HepG2 (cell line): ENCODE measurements at regions of chr5 and their contacts with region 1.

Region 1: DNA sequence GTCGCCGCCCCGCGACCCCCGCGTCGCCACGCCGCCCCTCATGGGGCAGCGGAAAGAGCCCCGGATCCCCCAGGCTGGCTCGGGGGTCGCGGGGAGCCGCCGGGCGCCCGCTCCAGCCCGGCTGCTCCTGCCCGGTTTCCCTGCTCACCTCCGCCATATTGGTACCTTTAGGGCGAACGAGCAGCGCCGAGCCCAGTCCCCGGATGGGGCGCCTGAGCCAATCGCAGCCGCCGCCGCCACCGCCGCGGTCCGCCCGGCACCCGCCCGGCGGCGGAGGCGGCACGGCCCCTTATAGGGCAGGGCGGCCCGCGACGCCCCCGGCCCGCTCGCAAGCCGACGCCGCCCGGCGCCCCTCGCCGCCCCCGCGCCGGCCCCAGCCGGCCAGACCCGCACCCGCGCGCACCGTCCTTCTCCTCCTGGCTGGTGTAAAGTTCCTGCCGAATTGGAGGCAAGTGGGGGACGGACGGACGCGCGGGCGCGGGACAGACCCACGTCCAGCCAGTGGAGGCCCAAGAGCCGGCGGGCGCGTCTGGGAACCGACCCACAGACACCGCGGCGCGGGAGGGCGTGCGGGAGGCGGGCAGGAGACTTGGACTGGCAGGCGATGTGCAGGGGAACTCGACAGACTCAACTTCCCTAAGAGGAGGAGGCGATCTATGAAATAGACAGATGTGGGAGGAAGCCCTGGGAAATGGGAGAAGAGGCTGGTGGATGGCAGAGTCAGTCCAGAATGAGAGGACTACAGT is at the start of gene MIER3:
- DNase-seq: peak; percentile 43
- ATAC-seq: peak; percentile 95
- H3K4me3 ChIP-seq: peak within 1 kb of the TSS; percentile 90 to 95 (median 91)
- H3K27ac ChIP-seq: peak within 1 kb of the TSS; percentile 72
- H3K4me1 ChIP-seq: peaks cover 31% of the 10 kb centered on the region
- H3K27me3 ChIP-seq: no peaks in the 10 kb centered on the region; a peak in 1 of 5 replicates
- CTCF ChIP-seq: no peak
- EP300 ChIP-seq: no peak
- POLR2A ChIP-seq: peak; percentile 55 to 56
- RAD21 ChIP-seq: no peak
- total RNA-seq, gene MIER3: 38.8 and 63.5 TPM in 2 replicates

Region 2: DNA sequence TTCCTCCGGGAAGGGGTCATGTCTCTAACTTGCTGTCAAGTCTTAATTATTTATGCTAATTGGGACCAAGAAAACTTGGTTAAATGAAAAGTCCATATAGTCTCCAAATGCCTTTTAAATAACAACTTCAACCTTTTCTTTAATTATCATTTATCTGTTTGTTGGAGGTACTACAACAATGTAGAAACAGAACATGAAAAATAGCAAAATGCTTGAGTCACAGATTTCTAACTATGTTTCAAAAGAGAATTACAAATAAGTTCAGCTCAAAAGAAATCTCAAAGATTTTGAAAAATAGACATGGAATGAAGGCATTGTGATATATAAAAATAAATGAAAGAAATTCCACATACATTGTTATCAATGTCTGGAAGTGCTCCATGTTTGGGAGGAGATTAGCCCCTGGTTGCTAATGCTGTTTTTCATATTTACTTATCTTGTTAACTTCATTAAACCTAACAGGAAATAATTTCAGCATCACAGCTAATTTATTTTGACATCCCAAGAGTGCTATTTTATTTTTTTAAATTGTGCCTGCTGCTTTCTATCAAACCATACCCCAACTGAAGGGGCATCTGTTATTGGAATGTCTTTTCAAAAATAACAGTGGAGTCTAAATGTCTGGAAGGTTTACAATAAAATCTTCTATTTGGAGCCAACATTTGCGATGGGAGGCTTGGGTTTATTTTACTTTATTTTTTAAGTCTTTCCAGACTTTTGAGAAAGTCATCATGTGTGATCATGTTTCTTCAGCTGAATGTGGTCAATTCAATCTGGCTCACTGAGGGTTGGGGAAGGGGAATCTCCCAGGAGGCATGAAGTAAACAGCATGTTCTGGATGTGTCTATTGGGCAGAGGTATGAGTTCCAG is 665.9 kb before region 1 on chr5:
- CTCF ChIA-PET with region 1: no interaction called
- POLR2A ChIA-PET with region 1: no interaction called
- in situ Hi-C with region 1: no loop called
- intact Hi-C with region 1: no loop called
- DNase-seq: no peak
- ATAC-seq: no peak
- H3K4me3 ChIP-seq: no peak overlapping the region
- H3K27ac ChIP-seq: no peak overlapping the region
- H3K4me1 ChIP-seq: peaks cover 43% of the 10 kb centered on the region
- H3K27me3 ChIP-seq: no peaks in the 10 kb centered on the region
- CTCF ChIP-seq: no peak
- EP300 ChIP-seq: no peak
- POLR2A ChIP-seq: no peak
- RAD21 ChIP-seq: no peak

Region 3: GRCh38 chr5:56838409-56839039 is 113.6 kb before region 1 on chr5:
- CTCF ChIA-PET with region 1: no interaction called
- POLR2A ChIA-PET with region 1: no interaction called
- in situ Hi-C with region 1: no loop called
- intact Hi-C with region 1: no loop called
- DNase-seq: peak; percentile 33
- ATAC-seq: no peak
- H3K4me3 ChIP-seq: no peak overlapping the region
- H3K27ac ChIP-seq: no peak overlapping the region
- H3K4me1 ChIP-seq: peaks cover 53% of the 10 kb centered on the region
- H3K27me3 ChIP-seq: no peaks in the 10 kb centered on the region
- CTCF ChIP-seq: peak; percentile 66
- EP300 ChIP-seq: no peak
- POLR2A ChIP-seq: no peak
- RAD21 ChIP-seq: peak; percentile 56

Region 4: DNA sequence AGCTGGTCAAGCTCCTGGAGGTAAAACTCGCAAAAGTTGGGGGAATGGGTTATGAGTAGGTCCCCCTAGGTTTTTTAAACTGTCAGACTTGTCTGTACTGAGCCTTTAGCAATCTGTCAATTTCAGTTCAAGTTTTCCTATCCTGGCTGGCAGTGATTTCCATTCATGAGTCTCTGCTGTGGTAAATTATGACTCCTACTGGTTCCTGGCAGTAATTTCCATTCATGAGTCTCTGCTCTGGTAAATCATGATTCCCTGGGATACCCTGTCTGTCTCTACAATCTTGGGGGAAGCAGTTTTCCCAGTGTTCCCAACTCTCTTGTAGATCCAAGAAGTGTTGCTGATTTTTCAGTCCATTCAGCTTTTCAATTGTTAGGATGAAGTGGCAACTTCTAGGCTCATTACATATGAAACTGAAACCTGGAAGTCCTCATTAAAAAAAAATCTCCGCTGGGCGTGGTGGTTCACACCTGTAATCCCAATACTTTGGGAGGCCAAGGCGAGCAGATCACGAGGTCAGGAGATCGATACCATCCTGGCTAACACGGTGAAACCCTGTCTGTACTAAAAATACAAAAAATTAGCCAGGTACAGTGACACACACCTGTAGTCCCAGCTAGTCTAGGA is 130.4 kb after region 1 on chr5:
- CTCF ChIA-PET with region 1: no interaction called
- POLR2A ChIA-PET with region 1: no interaction called
- in situ Hi-C with region 1: no loop called
- intact Hi-C with region 1: loop called (anchors 2 kb)
- DNase-seq: peak; percentile 51
- ATAC-seq: peak; percentile 77
- H3K4me3 ChIP-seq: no peak overlapping the region
- H3K27ac ChIP-seq: no peak overlapping the region
- H3K4me1 ChIP-seq: no peaks in the 10 kb centered on the region
- H3K27me3 ChIP-seq: no peaks in the 10 kb centered on the region
- CTCF ChIP-seq: peak; percentile 66
- EP300 ChIP-seq: no peak
- POLR2A ChIP-seq: no peak
- RAD21 ChIP-seq: peak; percentile 38; the same call in 1 of the 2 replicates

Region 5: GRCh38 chr5:57128325-57128724 is 176.2 kb after region 1 on chr5:
- CTCF ChIA-PET with region 1: no interaction called
- POLR2A ChIA-PET with region 1: no interaction called
- in situ Hi-C with region 1: loop called (anchors 25 kb)
- intact Hi-C with region 1: no loop called
- DNase-seq: peak; percentile 54
- ATAC-seq: peak; percentile 76
- H3K4me3 ChIP-seq: no peak overlapping the region
- H3K27ac ChIP-seq: no peak overlapping the region
- H3K4me1 ChIP-seq: peaks cover 16% of the 10 kb centered on the region
- H3K27me3 ChIP-seq: no peaks in the 10 kb centered on the region
- CTCF ChIP-seq: no peak
- EP300 ChIP-seq: no peak
- POLR2A ChIP-seq: no peak
- RAD21 ChIP-seq: no peak

Region 6: GRCh38 chr5:57173185-57174127 is 221.3 kb after region 1 on chr5 and contains the start of gene GPBP1:
- CTCF ChIA-PET with region 1: no interaction called
- POLR2A ChIA-PET with region 1: interaction called, 10 read pairs
- in situ Hi-C with region 1: no loop called
- intact Hi-C with region 1: no loop called
- DNase-seq: peak; percentile 96
- ATAC-seq: peak; percentile 85
- H3K4me3 ChIP-seq: peak within 1 kb of the TSS; percentile 90 to 94 (median 94)
- H3K27ac ChIP-seq: peak within 1 kb of the TSS; percentile 97
- H3K4me1 ChIP-seq: peaks cover 9% of the 10 kb centered on the region
- H3K27me3 ChIP-seq: no peaks in the 10 kb centered on the region; a peak in 1 of 5 replicates
- CTCF ChIP-seq: peak; percentile 47
- EP300 ChIP-seq: 0 out of 4 replicates have a peak, but pooled peaks of 1 of the 2 experiments have one; percentile 37
- POLR2A ChIP-seq: peak; percentile 50 to 79
- RAD21 ChIP-seq: peak; percentile 45; the same call in 1 of the 2 replicates
- total RNA-seq, gene GPBP1: 72.2 and 101 TPM in 2 replicates

Region 7: GRCh38 chr5:57383093-57383861 is 431.2 kb after region 1 on chr5:
- CTCF ChIA-PET with region 1: no interaction called
- POLR2A ChIA-PET with region 1: no interaction called
- in situ Hi-C with region 1: no loop called
- intact Hi-C with region 1: no loop called
- DNase-seq: peak; percentile 30
- ATAC-seq: peak; percentile 59
- H3K4me3 ChIP-seq: no peak overlapping the region
- H3K27ac ChIP-seq: no peak overlapping the region
- H3K4me1 ChIP-seq: no peaks in the 10 kb centered on the region
- H3K27me3 ChIP-seq: no peaks in the 10 kb centered on the region; a peak in 1 of 5 replicates
- CTCF ChIP-seq: no peak
- EP300 ChIP-seq: no peak
- POLR2A ChIP-seq: no peak
- RAD21 ChIP-seq: no peak